ENCODE measurements at regions of chr2 and their contacts with region 1.

Region 1: GRCh38 chr2:196703695-196704094 is 64.2 kb downstream of the CCDC150 start:
- DNase-seq: no peak
- ATAC-seq: no peak
- H3K4me3 ChIP-seq: no peak overlapping the region
- H3K27ac ChIP-seq: no peak overlapping the region
- H3K4me1 ChIP-seq: no peaks in the 10 kb centered on the region
- H3K27me3 ChIP-seq: no peaks in the 10 kb centered on the region
- CTCF ChIP-seq: no peak

Region 2: DNA sequence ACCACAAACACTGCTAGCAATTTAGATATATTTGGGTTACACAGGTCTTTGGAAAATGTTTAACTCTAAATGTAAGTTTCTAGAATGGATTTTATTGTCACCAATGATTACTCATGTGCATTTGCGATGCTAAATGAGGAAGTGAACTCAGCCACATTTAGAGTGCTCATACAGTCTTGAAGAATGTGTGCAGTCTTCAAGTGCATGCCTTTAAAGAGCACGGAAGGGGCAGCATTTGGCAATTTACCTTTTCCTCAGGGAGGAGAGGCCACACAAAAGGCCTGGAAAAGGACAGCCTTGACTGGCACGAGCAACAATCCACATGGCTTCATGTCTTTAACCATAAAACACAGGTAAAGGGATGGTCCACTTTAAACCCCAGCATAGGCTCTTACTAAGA is 453.8 kb before region 1 on chr2:
- CTCF ChIA-PET with region 1: no interaction called
- POLR2A ChIA-PET with region 1: no interaction called
- in situ Hi-C with region 1: no loop called
- intact Hi-C with region 1: no loop called
- DNase-seq: no peak
- ATAC-seq: no peak
- H3K4me3 ChIP-seq: no peak overlapping the region
- H3K27ac ChIP-seq: no peak overlapping the region
- H3K4me1 ChIP-seq: no peaks in the 10 kb centered on the region
- H3K27me3 ChIP-seq: no peaks in the 10 kb centered on the region
- CTCF ChIP-seq: no peak

Region 3: DNA sequence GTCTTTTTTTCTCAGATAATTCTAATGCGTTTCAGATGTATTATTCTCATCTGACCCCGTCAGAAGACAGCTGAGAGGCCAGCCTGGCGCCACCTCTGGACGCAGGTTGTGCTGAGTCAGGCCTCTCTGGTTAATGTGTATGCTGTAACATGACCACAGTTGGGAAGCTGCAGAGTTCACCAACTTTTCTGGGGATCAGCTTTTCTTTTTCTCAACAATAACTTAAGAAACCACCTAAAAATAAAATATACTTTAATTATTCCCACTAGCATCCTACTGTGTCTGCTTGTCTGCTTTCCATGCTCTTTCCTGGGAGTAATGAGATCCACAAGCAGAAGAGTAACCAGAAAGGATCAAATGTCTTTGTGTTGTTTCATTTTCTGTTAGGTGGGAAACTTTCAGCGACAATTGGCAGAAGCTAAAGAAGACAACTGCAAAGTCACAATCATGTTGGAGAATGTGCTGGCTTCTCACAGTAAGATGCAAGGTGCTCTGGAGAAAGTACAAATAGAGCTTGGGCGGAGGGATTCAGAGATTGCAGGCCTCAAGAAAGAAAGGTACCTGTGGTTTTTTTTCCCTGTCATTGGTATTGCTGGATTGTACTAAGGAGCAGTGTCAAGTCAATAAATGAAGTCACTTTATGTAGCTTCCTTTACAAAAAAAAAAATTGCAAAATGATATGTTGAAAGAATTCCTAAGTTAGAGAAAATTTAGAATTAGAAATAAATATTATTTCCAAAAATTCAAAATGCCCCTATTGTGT is 15.6 kb after region 1 on chr2:
- CTCF ChIA-PET with region 1: no interaction called
- POLR2A ChIA-PET with region 1: interaction called, 26 read pairs
- in situ Hi-C with region 1: no loop called
- intact Hi-C with region 1: no loop called
- DNase-seq: no peak
- ATAC-seq: peak; percentile 89
- H3K4me3 ChIP-seq: no peak overlapping the region
- H3K27ac ChIP-seq: no peak overlapping the region
- H3K4me1 ChIP-seq: no peaks in the 10 kb centered on the region
- H3K27me3 ChIP-seq: no peaks in the 10 kb centered on the region
- CTCF ChIP-seq: peak; percentile 51

Region 4: DNA sequence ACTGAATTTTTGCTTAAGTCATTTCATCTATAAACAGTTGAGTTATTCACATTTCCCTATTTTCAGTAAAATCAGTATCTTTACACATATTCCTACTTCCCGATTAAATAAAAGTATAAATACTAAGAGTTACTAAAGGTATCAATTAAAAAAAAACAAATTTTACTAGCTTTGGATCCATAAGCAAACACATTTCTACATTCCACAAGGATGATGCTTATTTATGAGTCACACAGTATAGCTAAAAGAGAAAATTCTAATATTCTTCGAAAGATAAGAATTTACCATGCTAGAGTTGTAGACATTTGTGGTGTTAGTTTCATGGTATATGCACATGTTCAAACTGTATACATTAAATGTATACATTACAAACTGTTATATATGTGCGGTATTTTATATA is 199.1 kb after region 1 on chr2:
- CTCF ChIA-PET with region 1: no interaction called
- POLR2A ChIA-PET with region 1: no interaction called
- in situ Hi-C with region 1: no loop called
- intact Hi-C with region 1: no loop called
- DNase-seq: no peak
- ATAC-seq: no peak
- H3K4me3 ChIP-seq: no peak overlapping the region
- H3K27ac ChIP-seq: no peak overlapping the region
- H3K4me1 ChIP-seq: no peaks in the 10 kb centered on the region
- H3K27me3 ChIP-seq: no peaks in the 10 kb centered on the region
- CTCF ChIP-seq: no peak

Measured in Panc1 (cell line).